GM10248 (cell line): ENCODE measurements at regions of chr15 and their contacts with region 1.

Region 1: GRCh38 chr15:31488426-31489204 is 162.0 kb downstream of the KLF13 start:
- DNase-seq: peak; percentile 81
- CTCF ChIP-seq: peak; percentile 63

Region 2: DNA sequence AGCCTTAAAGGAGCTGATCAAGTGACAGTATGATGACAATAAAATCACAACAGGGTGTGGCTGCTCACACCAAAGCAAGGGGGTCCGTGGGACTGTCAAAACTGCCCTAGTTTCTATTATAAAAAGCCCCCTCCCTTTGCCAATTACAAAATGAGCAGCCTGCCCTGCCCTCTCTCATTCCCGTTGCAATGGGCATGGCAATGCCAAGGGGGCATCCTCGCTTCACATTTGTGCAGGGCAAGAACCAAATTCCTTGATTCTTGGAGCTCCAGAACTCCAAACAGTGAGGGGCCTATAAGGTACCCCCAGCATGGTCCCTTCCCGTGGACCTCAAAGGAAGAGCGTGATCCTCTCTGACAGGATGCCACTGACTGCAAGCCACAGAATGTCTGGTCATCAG is 282.2 kb before region 1 on chr15:
- CTCF ChIA-PET with region 1: interaction called, 24 read pairs
- POLR2A ChIA-PET with region 1: no interaction called
- DNase-seq: no peak
- CTCF ChIP-seq: no peak

Region 3: GRCh38 chr15:31254431-31255175 is 234.0 kb before region 1 on chr15:
- CTCF ChIA-PET with region 1: interaction called, 12 read pairs
- POLR2A ChIA-PET with region 1: no interaction called
- DNase-seq: no peak
- CTCF ChIP-seq: no peak

Region 4: DNA sequence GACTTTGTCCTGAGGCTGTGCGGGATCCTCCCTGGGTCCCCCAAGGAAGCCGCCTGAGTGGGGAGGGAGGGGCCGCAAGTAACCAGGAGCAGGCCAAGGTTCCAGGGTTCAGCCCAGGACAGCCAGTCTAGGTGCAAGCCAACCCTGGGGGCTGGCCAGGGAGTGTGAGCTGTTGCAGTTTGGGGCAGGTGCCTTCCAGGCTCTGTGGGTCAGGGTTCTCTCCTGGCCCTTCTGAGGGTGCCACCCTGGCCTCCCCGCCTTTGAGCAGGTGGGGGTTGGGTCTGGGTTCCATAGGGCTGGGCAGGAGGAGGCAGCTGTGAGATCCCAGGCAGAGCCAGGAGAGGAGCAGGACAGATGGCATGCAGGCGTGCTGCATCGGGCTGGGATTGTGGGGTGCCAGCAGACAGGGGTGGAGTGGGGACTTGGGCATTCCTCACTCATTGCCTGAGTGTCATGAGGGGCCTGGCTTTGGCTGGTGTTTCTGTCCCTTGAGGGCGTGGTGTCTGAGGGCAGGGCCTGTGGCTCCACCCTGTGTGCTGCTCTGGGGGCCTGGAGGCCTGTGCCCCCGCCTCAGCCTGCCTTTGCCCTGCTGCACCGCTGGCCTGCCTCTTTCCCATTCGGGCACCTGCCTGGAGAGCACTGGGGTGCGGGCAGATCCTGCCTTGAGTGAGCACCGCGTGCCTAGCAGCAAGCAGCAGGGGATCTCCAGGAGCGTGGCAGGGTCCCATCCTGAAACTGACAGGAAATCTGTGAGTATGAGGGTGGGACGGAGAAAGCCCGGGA is 143.6 kb before region 1 on chr15:
- CTCF ChIA-PET with region 1: interaction called, 12 read pairs
- POLR2A ChIA-PET with region 1: no interaction called
- DNase-seq: peak; percentile 63
- CTCF ChIP-seq: no peak

Region 5: DNA sequence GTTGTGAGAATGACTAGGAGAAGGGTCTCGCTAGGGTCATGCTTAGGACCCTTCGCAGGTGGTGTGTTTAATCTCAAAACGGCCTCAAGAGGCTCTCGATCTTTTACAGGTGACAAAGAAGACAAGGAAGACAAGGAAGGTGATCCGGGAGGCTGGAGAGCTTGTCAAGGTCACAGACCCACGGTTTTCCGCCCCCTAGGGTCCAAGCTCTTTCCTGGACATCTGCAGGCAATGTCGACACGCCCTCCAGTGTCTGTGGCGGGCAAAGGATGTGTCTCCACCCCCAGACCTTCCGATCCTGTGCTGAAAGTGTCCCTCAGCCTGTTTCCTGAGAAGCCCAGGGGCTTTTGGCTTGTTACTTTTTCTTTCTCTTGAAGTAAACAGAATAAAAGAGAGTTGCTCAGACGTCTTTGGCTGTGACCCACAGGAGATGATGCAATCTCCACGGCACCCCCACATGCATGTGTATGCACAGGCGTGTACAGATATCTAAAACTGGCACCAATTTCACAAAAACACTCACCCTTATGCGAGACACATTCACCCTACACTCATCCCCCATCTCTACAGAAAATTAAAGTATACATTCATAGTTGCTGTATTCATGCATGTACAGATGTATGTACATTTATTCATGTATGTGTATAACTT is 53.2 kb before region 1 on chr15:
- CTCF ChIA-PET with region 1: interaction called, 251 read pairs
- POLR2A ChIA-PET with region 1: no interaction called
- DNase-seq: peak; percentile 84
- CTCF ChIP-seq: peak; percentile 91

Region 6: GRCh38 chr15:31465083-31465955 is 23.3 kb before region 1 on chr15:
- CTCF ChIA-PET with region 1: interaction called, 158 read pairs
- POLR2A ChIA-PET with region 1: no interaction called
- DNase-seq: no peak
- CTCF ChIP-seq: no peak

Region 7: DNA sequence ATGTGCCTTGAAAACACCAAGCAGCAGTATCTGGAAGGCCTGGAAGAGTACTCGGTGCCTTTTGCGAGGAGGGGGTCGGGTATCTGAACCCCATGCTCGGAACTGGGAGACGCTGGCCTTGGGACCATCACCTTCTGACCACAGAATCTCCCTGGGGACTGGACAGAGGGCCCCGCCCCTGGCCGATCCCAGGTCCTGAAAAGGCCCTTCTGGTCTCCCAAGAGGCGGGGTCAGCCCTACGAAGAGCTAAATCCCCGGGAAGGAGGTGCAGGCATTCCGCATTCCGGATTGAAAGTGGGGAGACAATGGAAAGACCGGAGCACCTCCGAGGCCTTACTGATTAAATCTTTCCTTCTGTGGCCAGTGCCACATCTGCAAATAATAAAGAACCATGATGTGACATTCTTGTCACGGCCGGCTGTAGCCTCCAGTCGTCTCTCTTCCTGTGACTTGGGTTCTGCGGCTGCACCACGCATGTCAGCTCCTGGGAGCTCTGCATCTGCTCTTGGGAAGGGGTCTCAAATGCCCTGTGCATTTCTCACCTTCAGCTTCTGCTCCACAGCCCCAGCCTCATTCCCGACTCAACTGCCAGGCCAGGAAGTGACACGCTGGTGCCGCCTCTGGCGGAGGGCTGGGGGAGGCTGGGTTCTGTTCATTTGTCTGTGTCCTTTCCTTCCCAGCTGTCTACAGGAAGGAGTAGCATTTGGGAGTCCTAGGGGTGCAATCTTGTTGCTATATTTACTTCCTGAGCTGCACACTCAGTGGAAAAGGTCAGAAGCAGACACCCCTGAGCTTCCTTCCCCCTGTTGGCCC is 11.5 kb after region 1 on chr15:
- CTCF ChIA-PET with region 1: interaction called, 62 read pairs
- POLR2A ChIA-PET with region 1: no interaction called
- DNase-seq: no peak
- CTCF ChIP-seq: no peak